H1 (cell line): ENCODE measurements at regions of chr2 and their contacts with region 1.

Region 1: GRCh38 chr2:70948337-70949003 is 12.8 kb downstream of the ATP6V1B1 start:
- DNase-seq: peak in 1 of 2 experiments; percentile 92
- H3K4me3 ChIP-seq: peak overlapping the region in 3 of 4 experiments; percentile 25 to 46 (median 38); a peak in 5 of 8 replicates
- H3K27ac ChIP-seq: no peak overlapping the region
- H3K4me1 ChIP-seq: peaks cover 1 to 6% (median 3%) of the 10 kb centered on the region in 4 experiments
- H3K27me3 ChIP-seq: peaks cover 11 to 29% (median 26%) of the 10 kb centered on the region in 4 experiments
- CTCF ChIP-seq: peak; percentile 81 to 88 (median 86)
- EP300 ChIP-seq: no peak
- POLR2A ChIP-seq: no peak
- RAD21 ChIP-seq: peak; percentile 45 to 47; a peak in 3 of 4 replicates

Region 2: DNA sequence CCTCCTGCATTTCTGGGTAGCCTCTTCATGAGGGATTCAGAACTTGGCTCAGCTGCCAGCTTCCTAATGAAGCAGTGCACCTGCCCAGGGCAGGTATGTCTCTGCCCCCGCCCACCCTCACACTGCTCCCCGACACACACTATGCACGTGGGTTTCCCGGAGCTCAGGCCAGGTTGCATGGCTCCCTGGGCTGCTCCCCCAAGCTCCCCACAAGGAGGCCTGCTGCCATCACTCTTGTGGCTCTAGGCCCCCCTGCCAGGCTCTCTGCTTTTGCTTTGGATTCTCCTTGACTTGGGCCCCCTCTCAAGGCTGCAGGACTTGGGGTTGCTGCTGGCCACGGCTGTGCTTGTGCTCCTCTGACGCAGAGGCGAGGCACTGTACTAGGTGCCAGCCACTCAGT is 224.1 kb before region 1 on chr2:
- CTCF ChIA-PET with region 1: no interaction called
- POLR2A ChIA-PET with region 1: no interaction called
- DNase-seq: peak in 1 of 2 experiments; percentile 41
- H3K4me3 ChIP-seq: no peak overlapping the region
- H3K27ac ChIP-seq: no peak overlapping the region
- H3K4me1 ChIP-seq: peaks cover 11 to 28% (median 22%) of the 10 kb centered on the region in 4 experiments
- H3K27me3 ChIP-seq: no peaks in the 10 kb centered on the region
- CTCF ChIP-seq: no peak
- EP300 ChIP-seq: no peak
- POLR2A ChIP-seq: no peak
- RAD21 ChIP-seq: no peak

Region 3: GRCh38 chr2:70789304-70790135 is 158.9 kb before region 1 on chr2:
- CTCF ChIA-PET with region 1: interaction called, 26 read pairs
- POLR2A ChIA-PET with region 1: no interaction called
- DNase-seq: peak; percentile 57 to 84
- H3K4me3 ChIP-seq: peak overlapping the region in 2 of 4 experiments; percentile 19 to 54; a peak in 5 of 8 replicates
- H3K27ac ChIP-seq: no peak overlapping the region
- H3K4me1 ChIP-seq: peaks cover 0 to 3% (median 0%) of the 10 kb centered on the region in 4 experiments; a peak in 1 of 7 replicates
- H3K27me3 ChIP-seq: peaks cover 35 to 58% (median 42%) of the 10 kb centered on the region in 4 experiments
- CTCF ChIP-seq: peak; percentile 75 to 92 (median 86)
- EP300 ChIP-seq: no peak
- POLR2A ChIP-seq: no peak
- RAD21 ChIP-seq: peak; percentile 89 to 94

Region 4: DNA sequence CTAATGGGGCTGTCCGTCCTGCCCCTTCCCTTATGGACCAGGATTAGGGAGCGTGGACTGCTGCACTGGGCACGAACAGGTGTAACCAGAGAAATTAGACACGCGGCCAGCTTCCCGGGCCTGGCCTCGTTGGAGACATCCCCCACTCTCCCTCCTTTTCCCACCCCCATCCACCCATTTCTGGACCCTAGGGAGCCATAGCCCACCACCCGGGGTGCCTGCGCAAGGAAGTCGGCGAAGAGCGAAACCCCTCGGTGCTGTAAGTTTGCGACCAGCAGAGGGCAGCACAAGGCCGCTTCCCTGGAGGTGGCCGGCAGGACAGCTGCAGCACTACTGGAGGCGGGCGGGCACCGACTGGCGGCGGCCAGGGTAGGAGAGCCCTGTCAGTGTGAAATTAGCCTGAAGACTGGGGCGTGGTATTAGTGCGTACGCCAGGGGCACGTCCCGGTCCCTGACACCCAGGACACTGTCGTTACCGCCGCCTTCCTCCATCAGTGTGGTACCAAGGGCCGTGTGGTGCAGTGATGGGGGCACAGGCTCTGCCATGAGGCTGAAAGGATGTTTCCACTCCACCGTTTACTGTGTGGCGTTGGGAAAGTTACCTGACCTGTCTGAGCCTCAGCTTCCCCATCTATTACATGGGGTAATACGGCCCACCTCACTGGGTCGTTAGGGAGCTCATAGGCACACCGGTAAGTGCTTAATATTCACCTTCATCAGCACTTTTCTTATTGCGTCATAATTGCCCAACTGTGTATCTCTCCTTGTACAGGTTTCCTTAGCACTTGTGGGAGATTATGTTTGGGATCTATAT is 76.9 kb before region 1 on chr2:
- CTCF ChIA-PET with region 1: interaction called, 513 read pairs
- POLR2A ChIA-PET with region 1: interaction called, 3 read pairs
- DNase-seq: peak in 1 of 2 experiments; percentile 98
- H3K4me3 ChIP-seq: no peak overlapping the region
- H3K27ac ChIP-seq: no peak overlapping the region
- H3K4me1 ChIP-seq: no peaks in the 10 kb centered on the region
- H3K27me3 ChIP-seq: peaks cover 6 to 42% (median 22%) of the 10 kb centered on the region in 4 experiments
- CTCF ChIP-seq: peak; percentile 89 to 99 (median 96)
- EP300 ChIP-seq: no peak
- POLR2A ChIP-seq: no peak
- RAD21 ChIP-seq: peak; percentile 92 to 96

Region 5: GRCh38 chr2:70896765-70897202 is 51.7 kb before region 1 on chr2:
- CTCF ChIA-PET with region 1: interaction called, 29 read pairs
- POLR2A ChIA-PET with region 1: no interaction called
- DNase-seq: no peak
- H3K4me3 ChIP-seq: peak overlapping the region in 1 of 4 experiments; percentile 20; a peak in 1 of 8 replicates
- H3K27ac ChIP-seq: no peak overlapping the region
- H3K4me1 ChIP-seq: peaks cover 0 to 28% (median 21%) of the 10 kb centered on the region in 4 experiments; a peak in 6 of 7 replicates
- H3K27me3 ChIP-seq: peaks cover 98 to 99% (median 99%) of the 10 kb centered on the region in 4 experiments
- CTCF ChIP-seq: no peak
- EP300 ChIP-seq: no peak
- POLR2A ChIP-seq: no peak
- RAD21 ChIP-seq: no peak

Region 6: GRCh38 chr2:70919672-70920366 is 28.7 kb before region 1 on chr2:
- CTCF ChIA-PET with region 1: interaction called, 448 read pairs
- POLR2A ChIA-PET with region 1: no interaction called
- DNase-seq: peak; percentile 79 to 99
- H3K4me3 ChIP-seq: no peak overlapping the region
- H3K27ac ChIP-seq: no peak overlapping the region
- H3K4me1 ChIP-seq: peaks cover 0 to 8% (median 3%) of the 10 kb centered on the region in 4 experiments; a peak in 4 of 7 replicates
- H3K27me3 ChIP-seq: peaks cover 0 to 4% (median 0%) of the 10 kb centered on the region in 4 experiments; a peak in 1 of 7 replicates
- CTCF ChIP-seq: peak; percentile 91 to 98 (median 96)
- EP300 ChIP-seq: no peak
- POLR2A ChIP-seq: no peak
- RAD21 ChIP-seq: peak; percentile 77 to 82

Region 7: DNA sequence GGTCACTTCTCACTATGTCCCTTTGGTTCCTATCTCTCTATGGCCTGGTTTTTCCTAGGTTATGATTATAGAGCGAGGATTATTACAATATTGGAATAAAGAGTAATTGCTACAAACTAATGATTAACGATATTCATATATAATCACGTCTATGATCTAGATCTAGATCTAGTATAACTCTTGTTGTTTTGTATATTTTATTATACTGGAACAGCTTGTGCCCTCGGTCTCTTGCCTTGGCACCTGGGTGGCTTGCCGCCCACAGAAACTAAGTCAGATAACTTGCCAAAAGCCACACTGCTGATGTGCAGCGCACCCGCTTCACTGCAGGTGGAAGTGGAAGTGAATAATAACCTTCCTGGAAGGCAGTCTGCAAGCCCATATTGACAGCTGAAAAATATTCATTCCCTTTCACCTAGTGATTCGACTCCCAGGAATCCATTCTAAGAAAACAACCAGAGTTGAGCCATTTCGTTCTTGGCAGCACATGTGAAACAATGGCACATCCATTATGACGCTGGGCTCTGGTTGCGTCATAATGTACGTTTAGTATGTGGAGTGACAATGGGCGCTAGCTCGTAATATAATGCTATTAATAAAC is 29.2 kb after region 1 on chr2:
- CTCF ChIA-PET with region 1: interaction called, 12 read pairs
- POLR2A ChIA-PET with region 1: no interaction called
- DNase-seq: peak in 1 of 2 experiments; percentile 48
- H3K4me3 ChIP-seq: peak overlapping the region in 3 of 4 experiments; percentile 49 to 70 (median 62); a peak in 4 of 8 replicates
- H3K27ac ChIP-seq: no peak overlapping the region
- H3K4me1 ChIP-seq: peaks cover 0 to 14% (median 4%) of the 10 kb centered on the region in 4 experiments; a peak in 6 of 7 replicates
- H3K27me3 ChIP-seq: peaks cover 0 to 27% (median 9%) of the 10 kb centered on the region in 4 experiments; a peak in 5 of 7 replicates
- CTCF ChIP-seq: no peak
- EP300 ChIP-seq: no peak
- POLR2A ChIP-seq: no peak
- RAD21 ChIP-seq: no peak

Region 8: GRCh38 chr2:71150082-71150816 is 201.8 kb after region 1 on chr2:
- CTCF ChIA-PET with region 1: no interaction called
- POLR2A ChIA-PET with region 1: no interaction called
- DNase-seq: no peak
- H3K4me3 ChIP-seq: no peak overlapping the region
- H3K27ac ChIP-seq: no peak overlapping the region
- H3K4me1 ChIP-seq: no peaks in the 10 kb centered on the region
- H3K27me3 ChIP-seq: no peaks in the 10 kb centered on the region; a peak in 1 of 7 replicates
- CTCF ChIP-seq: peak in 1 of 3 experiments; percentile 29; a peak in 1 of 4 replicates
- EP300 ChIP-seq: no peak
- POLR2A ChIP-seq: no peak
- RAD21 ChIP-seq: no peak